Astrocyte of the cerebellum (primary cell): ENCODE measurements at regions of chr4 and their contacts with region 1.

Region 1: DNA sequence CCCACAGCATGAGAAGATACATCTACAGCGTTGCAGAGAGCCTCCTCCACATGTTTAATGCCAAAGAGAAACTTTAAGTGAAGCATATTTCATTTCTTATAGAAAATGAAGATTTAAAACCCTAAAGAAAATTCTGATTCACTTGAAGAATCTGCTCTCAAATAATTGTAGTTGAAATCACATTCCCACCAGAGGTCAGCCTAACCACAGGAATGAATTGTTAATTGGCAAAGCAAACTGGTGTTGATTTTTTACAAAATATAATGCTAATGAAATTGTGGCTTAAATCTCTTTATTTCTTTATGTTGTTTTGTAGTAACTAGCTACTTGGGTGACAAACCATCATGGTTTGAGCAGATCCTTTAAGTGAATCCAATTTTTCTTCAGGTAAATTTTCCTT is 31.1 kb upstream of the WDR17 start:
- DNase-seq: peak; percentile 50
- H3K4me3 ChIP-seq: no peak overlapping the region
- CTCF ChIP-seq: peak; percentile 14

Region 2: GRCh38 chr4:176002007-176002613 is 32.4 kb before region 1 on chr4:
- in situ Hi-C with region 1: no loop called
- DNase-seq: no peak
- H3K4me3 ChIP-seq: peak overlapping the region; percentile 48
- CTCF ChIP-seq: no peak

Region 3: DNA sequence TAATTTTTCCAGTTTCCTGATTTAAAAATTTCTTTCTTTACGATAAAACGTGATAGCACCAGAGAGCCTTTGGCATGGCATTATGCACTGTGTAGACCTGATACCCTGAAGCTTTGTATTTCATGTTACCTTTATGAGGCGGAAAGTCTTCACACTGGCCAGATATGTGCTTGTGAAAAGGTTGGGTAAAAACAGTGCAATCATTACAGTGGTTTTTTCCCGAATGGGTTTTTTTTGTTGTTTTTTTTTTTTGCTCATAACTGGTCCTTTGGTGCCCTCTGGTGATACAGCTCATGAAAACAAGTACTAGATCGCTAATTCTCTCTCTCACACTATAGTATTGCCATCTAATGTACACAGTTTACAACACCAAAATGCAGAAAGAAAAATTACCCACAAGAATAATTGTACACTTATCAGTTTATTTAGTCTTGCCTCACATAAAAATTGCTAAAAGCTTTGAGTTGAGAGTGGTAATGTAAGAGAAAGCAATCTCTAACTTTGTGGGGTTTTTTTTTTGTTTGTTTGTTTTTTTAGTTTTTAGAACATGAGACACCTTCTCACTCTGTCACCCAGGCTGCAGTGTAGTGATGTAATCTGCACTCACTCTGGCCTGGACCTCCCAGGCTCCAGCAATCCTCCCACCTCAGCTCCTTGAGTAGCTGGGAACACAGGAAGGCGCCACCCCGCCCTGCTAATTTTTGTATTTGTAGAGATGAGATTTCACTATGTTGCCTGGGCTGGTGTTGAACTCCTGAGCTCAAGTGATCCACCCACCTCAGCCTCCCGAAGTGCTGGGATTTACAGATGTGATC is 306.6 kb after region 1 on chr4:
- in situ Hi-C with region 1: loop called (anchors 25 kb)
- DNase-seq: peak; percentile 38
- H3K4me3 ChIP-seq: no peak overlapping the region
- CTCF ChIP-seq: peak; percentile 43